Activated naive CD4-positive, alpha-beta T cell treated with anti-CD3 and anti-CD28 coated beads for 36 hours (primary cell): ENCODE measurements at regions of chr12 and their contacts with region 1.

Region 1: GRCh38 chr12:68530965-68531364 is 79.7 kb upstream of the RAP1B start:
- DNase-seq: no peak
- H3K4me3 Mint-ChIP-seq: no peak overlapping the region
- H3K27ac Mint-ChIP-seq: no peak overlapping the region
- H3K4me1 Mint-ChIP-seq: peaks cover 13% of the 10 kb centered on the region
- H3K27me3 Mint-ChIP-seq: no peaks in the 10 kb centered on the region

Region 2: GRCh38 chr12:68515793-68516192 is 15.2 kb before region 1 on chr12:
- CTCF ChIA-PET with region 1: no interaction called
- intact Hi-C with region 1: loop called (anchors 2 kb)
- DNase-seq: no peak
- H3K4me3 Mint-ChIP-seq: no peak overlapping the region
- H3K27ac Mint-ChIP-seq: no peak overlapping the region
- H3K4me1 Mint-ChIP-seq: no peaks in the 10 kb centered on the region
- H3K27me3 Mint-ChIP-seq: no peaks in the 10 kb centered on the region